ENCODE measurements at regions of chr12 and their contacts with region 1.

Region 1: GRCh38 chr12:15584366-15585041 is 204.7 kb downstream of the EPS8 start:
- DNase-seq: no peak
- H3K4me3 ChIP-seq: no peak overlapping the region
- H3K27ac ChIP-seq: no peak overlapping the region
- H3K27me3 ChIP-seq: no peaks in the 10 kb centered on the region
- CTCF ChIP-seq: peak; percentile 85

Region 2: DNA sequence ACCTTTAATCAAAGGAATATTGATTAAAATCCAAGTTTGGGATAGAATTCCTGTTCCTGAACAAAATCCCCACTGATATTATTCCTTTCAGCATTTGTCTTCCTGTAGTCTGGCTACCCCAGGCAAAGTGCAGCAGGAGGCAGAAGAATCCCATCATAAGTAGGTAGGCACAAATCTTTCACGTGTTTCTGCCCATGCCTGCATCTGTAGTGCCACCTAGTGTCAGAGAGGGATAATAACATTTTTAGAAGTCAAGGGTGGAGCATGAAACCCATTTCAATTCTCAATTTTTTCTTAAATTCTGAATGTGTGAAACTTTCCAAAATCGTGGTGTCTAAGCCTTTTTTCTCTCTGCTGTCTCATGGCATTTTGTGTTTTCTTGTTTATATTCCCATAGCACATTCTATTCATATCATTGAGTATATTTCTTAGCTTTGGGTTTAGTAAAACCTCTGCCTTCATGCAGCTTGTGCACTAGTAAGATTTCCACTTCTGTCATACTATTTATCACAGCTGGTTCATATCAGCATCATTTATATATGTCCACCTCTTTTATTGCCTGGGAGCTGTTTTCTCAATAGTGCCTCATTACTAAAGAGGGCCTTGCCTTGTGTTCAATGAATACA is 315.5 kb before region 1 on chr12:
- CTCF ChIA-PET with region 1: interaction called, 150 read pairs
- POLR2A ChIA-PET with region 1: no interaction called
- DNase-seq: peak; percentile 23
- H3K4me3 ChIP-seq: no peak overlapping the region
- H3K27ac ChIP-seq: no peak overlapping the region
- H3K27me3 ChIP-seq: no peaks in the 10 kb centered on the region
- CTCF ChIP-seq: peak; percentile 94

Region 3: GRCh38 chr12:15522565-15523187 is 61.8 kb before region 1 on chr12:
- CTCF ChIA-PET with region 1: interaction called, 28 read pairs
- POLR2A ChIA-PET with region 1: no interaction called
- DNase-seq: no peak
- H3K4me3 ChIP-seq: no peak overlapping the region
- H3K27ac ChIP-seq: no peak overlapping the region
- H3K27me3 ChIP-seq: peaks cover 8% of the 10 kb centered on the region
- CTCF ChIP-seq: peak; percentile 58

Region 4: DNA sequence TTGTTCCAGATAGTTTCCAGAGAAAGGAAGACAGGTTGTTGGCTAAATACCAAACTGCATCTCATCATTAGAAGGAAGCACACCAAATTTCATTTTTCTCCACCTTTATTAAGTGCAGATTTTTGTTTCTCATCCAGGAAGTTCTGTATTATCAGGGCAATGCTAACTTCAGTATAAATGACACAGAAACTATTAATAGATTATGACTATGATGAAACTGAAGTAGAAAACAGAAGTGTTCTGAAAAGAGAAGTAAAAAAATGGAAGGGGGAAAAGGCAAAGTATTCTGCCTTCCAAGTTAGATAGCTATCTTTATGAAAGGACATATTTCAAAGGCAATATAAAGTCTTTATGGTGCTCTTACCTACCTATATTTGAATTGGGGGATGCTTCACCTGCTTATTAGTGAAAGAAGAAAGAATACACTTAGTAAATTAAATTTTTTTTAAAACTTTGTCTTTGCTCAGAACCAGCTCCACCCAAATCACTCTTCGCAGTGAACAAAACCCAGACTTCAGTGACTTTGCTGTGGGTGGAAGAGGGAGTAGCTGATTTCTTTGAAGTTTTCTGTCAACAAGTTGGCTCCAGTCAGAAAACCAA is 38.3 kb before region 1 on chr12:
- CTCF ChIA-PET with region 1: interaction called, 13 read pairs
- POLR2A ChIA-PET with region 1: no interaction called
- DNase-seq: no peak
- H3K4me3 ChIP-seq: no peak overlapping the region
- H3K27ac ChIP-seq: no peak overlapping the region
- H3K27me3 ChIP-seq: no peaks in the 10 kb centered on the region
- CTCF ChIP-seq: no peak

Region 5: GRCh38 chr12:15846887-15847286 is 262.4 kb after region 1 on chr12:
- CTCF ChIA-PET with region 1: interaction called, 19 read pairs
- POLR2A ChIA-PET with region 1: no interaction called
- DNase-seq: no peak
- H3K4me3 ChIP-seq: no peak overlapping the region
- H3K27ac ChIP-seq: no peak overlapping the region
- H3K27me3 ChIP-seq: no peaks in the 10 kb centered on the region
- CTCF ChIP-seq: no peak

Region 6: GRCh38 chr12:15899282-15899870 is 314.9 kb after region 1 on chr12:
- CTCF ChIA-PET with region 1: interaction called, 10 read pairs
- POLR2A ChIA-PET with region 1: no interaction called
- DNase-seq: no peak
- H3K4me3 ChIP-seq: no peak overlapping the region
- H3K27ac ChIP-seq: no peak overlapping the region
- H3K27me3 ChIP-seq: no peaks in the 10 kb centered on the region
- CTCF ChIP-seq: peak; percentile 70

Measured in AG04450 (cell line).